CD8-positive, alpha-beta T cell (primary cell): ENCODE measurements at regions of chr19 and their contacts with region 1.

Region 1: GRCh38 chr19:17235618-17236377 is 9.8 kb downstream of the OCEL1 start:
- DNase-seq: peak; percentile 52 to 91 (median 78)
- ATAC-seq: peak; percentile 89
- H3K4me3 ChIP-seq: peak overlapping the region; percentile 63 to 86
- H3K4me3 Mint-ChIP-seq: peak overlapping the region; percentile 78
- H3K27ac ChIP-seq: peak overlapping the region in 1 of 2 experiments; percentile 40
- H3K27ac Mint-ChIP-seq: no peak overlapping the region
- H3K4me1 ChIP-seq: peaks cover 13% of the 10 kb centered on the region
- H3K4me1 Mint-ChIP-seq: peaks cover 10% of the 10 kb centered on the region
- H3K27me3 ChIP-seq: no peaks in the 10 kb centered on the region
- H3K27me3 Mint-ChIP-seq: no peaks in the 10 kb centered on the region
- CTCF ChIP-seq: peak; percentile 58

Region 2: GRCh38 chr19:17021793-17022583 is 213.8 kb before region 1 on chr19:
- CTCF ChIA-PET with region 1: no interaction called
- POLR2A ChIA-PET with region 1: no interaction called
- intact Hi-C with region 1: no loop called
- DNase-seq: peak in 1 of 9 experiments; percentile 29
- ATAC-seq: no peak
- H3K4me3 ChIP-seq: no peak overlapping the region
- H3K4me3 Mint-ChIP-seq: no peak overlapping the region
- H3K27ac ChIP-seq: no peak overlapping the region
- H3K27ac Mint-ChIP-seq: no peak overlapping the region
- H3K4me1 ChIP-seq: no peaks in the 10 kb centered on the region
- H3K4me1 Mint-ChIP-seq: peaks cover 6% of the 10 kb centered on the region
- H3K27me3 ChIP-seq: peaks cover 0 to 5% of the 10 kb centered on the region in 2 experiments
- H3K27me3 Mint-ChIP-seq: peaks cover 29% of the 10 kb centered on the region
- CTCF ChIP-seq: no peak

Region 3: DNA sequence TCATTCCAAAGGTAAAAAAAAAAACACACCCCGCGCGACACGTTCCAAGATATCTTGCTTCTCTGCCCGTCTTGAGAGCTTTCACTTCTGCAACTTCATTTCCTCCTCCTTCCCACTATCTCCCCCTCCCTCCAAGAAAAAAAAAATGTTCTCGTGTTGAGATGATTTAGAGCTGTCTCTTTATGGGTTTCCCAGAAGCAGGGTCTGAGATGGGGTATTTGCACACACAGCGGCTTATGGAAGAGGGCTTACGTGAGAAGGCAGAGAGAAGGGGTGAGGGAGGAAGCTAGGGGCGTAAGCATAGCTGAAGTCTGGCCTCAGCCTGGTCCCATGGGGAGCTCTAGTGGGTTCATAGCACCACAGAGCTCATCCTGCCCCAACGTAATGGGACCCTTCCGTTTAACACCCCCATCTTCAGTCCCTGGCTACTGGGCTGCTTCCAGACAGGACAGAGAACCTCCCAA is 51.9 kb before region 1 on chr19:
- CTCF ChIA-PET with region 1: interaction called, 4 read pairs
- POLR2A ChIA-PET with region 1: interaction called, 3 read pairs
- intact Hi-C with region 1: loop called in 1 of 2 experiments (anchors 1 kb)
- DNase-seq: peak in 6 of 9 experiments; percentile 19 to 71 (median 42)
- ATAC-seq: peak; percentile 56
- H3K4me3 ChIP-seq: peak overlapping the region; percentile 36 to 52
- H3K4me3 Mint-ChIP-seq: peak overlapping the region; percentile 92
- H3K27ac ChIP-seq: peak overlapping the region; percentile 57 to 78
- H3K27ac Mint-ChIP-seq: peak overlapping the region; percentile 97
- H3K4me1 ChIP-seq: peaks cover 20% of the 10 kb centered on the region
- H3K4me1 Mint-ChIP-seq: peaks cover 32% of the 10 kb centered on the region
- H3K27me3 ChIP-seq: no peaks in the 10 kb centered on the region
- H3K27me3 Mint-ChIP-seq: no peaks in the 10 kb centered on the region
- CTCF ChIP-seq: no peak

Region 4: DNA sequence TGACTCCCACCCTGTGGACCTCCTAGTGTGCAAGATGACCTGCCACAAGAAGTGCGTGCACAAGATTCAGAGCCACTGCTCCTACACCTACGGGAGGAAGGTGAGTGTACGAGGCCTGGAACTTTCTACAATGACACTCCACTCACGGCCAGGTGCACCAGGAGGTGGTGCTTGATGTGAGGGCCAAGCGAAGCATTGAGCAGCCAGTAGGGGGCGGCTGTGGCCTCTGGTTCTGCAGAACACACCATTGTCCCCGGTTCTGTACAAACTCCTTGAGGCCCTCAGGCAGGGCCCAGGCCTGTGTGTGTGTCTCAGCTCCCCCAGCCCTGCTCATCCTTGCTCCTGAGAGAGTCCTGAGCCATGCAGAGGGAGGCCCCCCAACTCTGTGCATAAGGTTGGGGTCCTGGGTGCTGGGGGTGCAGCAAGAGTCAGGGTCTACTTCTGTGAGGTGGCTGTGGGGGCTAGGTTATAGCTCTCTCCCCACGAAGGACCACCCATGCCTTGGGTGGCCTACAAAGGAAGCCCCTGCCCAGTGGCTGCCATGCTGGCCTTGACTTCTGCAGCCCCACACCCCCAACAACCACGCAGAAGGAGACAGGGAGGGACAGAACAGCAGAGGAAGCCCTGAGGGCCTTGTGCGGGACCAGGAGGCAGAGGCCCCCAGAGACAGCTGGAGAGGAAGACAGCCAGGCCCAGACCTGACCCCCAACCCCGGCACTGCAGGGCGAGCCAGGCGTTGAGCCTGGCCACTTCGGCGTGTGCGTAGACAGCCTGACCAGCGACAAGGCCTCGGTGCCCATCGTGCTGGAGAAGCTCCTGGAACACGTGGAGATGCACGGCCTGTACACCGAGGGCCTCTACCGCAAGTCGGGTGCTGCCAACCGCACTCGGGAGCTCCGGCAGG is 30.3 kb before region 1 on chr19:
- CTCF ChIA-PET with region 1: no interaction called
- POLR2A ChIA-PET with region 1: no interaction called
- intact Hi-C with region 1: loop called (anchors 1 kb)
- DNase-seq: peak; percentile 37 to 74 (median 61)
- ATAC-seq: peak; percentile 64
- H3K4me3 ChIP-seq: no peak overlapping the region
- H3K4me3 Mint-ChIP-seq: no peak overlapping the region
- H3K27ac ChIP-seq: no peak overlapping the region
- H3K27ac Mint-ChIP-seq: no peak overlapping the region
- H3K4me1 ChIP-seq: no peaks in the 10 kb centered on the region
- H3K4me1 Mint-ChIP-seq: peaks cover 3% of the 10 kb centered on the region
- H3K27me3 ChIP-seq: no peaks in the 10 kb centered on the region
- H3K27me3 Mint-ChIP-seq: no peaks in the 10 kb centered on the region
- CTCF ChIP-seq: peak; percentile 35

Region 5: GRCh38 chr19:17623224-17623935 is 387.6 kb after region 1 on chr19:
- CTCF ChIA-PET with region 1: no interaction called
- POLR2A ChIA-PET with region 1: no interaction called
- intact Hi-C with region 1: no loop called
- DNase-seq: no peak
- ATAC-seq: no peak
- H3K4me3 ChIP-seq: no peak overlapping the region
- H3K4me3 Mint-ChIP-seq: no peak overlapping the region
- H3K27ac ChIP-seq: no peak overlapping the region
- H3K27ac Mint-ChIP-seq: no peak overlapping the region
- H3K4me1 ChIP-seq: no peaks in the 10 kb centered on the region
- H3K4me1 Mint-ChIP-seq: no peaks in the 10 kb centered on the region
- H3K27me3 ChIP-seq: peaks cover 0 to 3% of the 10 kb centered on the region in 2 experiments
- H3K27me3 Mint-ChIP-seq: peaks cover 15% of the 10 kb centered on the region
- CTCF ChIP-seq: no peak